Left lung (tissue), 14 donors: ENCODE measurements at regions of chr1 and their contacts with region 1.

Region 1: DNA sequence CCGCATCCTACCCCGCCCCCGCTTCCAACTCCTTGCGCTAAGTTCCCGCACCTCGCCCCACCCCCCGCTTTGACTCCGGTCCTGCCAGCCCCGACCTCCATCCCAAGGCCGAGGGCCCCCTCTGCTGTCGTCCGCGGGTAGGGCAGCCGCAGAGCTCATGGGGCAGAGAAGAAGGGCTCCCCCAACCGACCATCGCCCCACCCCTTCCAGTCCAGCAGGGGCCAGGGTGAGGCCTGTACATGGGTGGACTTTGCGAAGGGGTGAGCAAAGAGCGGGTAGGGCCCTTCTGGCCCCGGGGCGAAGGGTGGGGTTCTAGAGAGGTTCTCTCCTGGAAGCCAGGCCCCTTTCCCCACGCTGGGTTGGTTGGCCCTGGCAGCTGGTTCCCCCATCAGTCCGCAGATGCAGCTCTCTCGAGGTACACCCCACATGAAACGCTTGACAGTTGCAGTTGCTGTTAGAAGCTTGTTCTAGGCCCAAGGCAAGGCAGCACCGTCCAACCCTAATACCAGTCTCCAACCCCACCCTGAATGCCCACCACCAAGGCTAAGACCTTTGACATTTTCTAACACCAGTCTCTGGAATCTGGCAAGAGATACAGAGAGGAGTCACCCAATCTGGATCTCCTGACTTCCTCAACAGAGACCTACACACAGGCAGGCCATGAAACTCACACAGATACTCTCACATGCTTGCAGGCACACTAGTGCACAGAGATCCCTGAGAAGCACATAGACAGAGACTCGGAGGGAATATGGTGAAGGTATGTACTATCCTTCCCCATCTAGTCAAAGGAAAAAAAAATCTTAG is 25.3 kb upstream of the ADGRB2 start:
- DNase-seq: peak; percentile 83 to 99 (median 94)
- ATAC-seq: peak; percentile 97
- H3K4me3 ChIP-seq: peak overlapping the region; percentile 62 to 66
- H3K27ac ChIP-seq: peak overlapping the region in 1 of 2 donors; percentile 92
- H3K4me1 ChIP-seq: peaks cover 0 to 18% of the 10 kb centered on the region in 2 donors
- H3K27me3 ChIP-seq: peaks cover 0 to 12% of the 10 kb centered on the region in 2 donors
- CTCF ChIP-seq: peak; percentile 84 to 90

Region 2: DNA sequence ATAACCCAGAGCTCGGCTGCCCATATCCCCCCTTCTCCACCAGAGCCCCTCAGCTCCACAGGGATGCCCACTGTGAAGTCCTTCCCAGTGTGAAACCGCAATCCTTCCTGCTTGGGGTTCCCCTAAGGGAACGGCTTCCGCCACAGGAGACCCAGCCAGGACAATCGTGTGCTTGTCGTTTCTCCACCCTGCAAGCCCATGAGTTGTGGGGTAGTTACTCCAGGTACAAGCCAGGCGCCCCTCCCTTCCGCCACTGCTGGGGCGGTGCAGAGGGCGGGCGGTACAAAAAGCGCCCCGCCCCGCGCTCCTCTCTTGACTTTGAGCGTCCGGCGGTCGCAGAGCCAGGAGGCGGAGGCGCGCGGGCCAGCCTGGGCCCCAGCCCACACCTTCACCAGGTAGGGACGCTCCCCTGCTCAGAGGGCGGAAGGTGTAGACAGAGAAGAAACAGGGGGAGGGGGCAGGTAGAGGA is 213.2 kb before region 1 on chr1 and contains the start of gene TINAGL1:
- intact Hi-C with region 1: loop called in 1 of 2 experiments (anchors 10 kb)
- DNase-seq: peak in 3 of 4 donors; percentile 63 to 86 (median 75)
- ATAC-seq: peak; percentile 79
- H3K4me3 ChIP-seq: peak within 1 kb of the TSS; percentile 27 to 54
- H3K27ac ChIP-seq: peak within 1 kb of the TSS; percentile 66 to 67
- H3K4me1 ChIP-seq: peaks cover 19 to 47% of the 10 kb centered on the region in 2 donors
- H3K27me3 ChIP-seq: peaks cover 0 to 17% of the 10 kb centered on the region in 2 donors
- CTCF ChIP-seq: no peak
- polyA plus RNA-seq, gene TINAGL1: 34.0 to 55.1 (median 45.7) TPM

Region 3: GRCh38 chr1:31663622-31664452 is 125.6 kb before region 1 on chr1:
- intact Hi-C with region 1: loop called (anchors 5 to 10 kb)
- DNase-seq: peak in 3 of 4 donors; percentile 46 to 70 (median 49)
- ATAC-seq: peak; percentile 55
- H3K4me3 ChIP-seq: no peak overlapping the region
- H3K27ac ChIP-seq: no peak overlapping the region
- H3K4me1 ChIP-seq: peaks cover 7 to 8% of the 10 kb centered on the region in 2 donors
- H3K27me3 ChIP-seq: peaks cover 0 to 2% of the 10 kb centered on the region in 2 donors
- CTCF ChIP-seq: peak; percentile 76 to 86

Region 4: GRCh38 chr1:31855038-31855845 is 65.8 kb after region 1 on chr1:
- intact Hi-C with region 1: no loop called
- DNase-seq: no peak
- ATAC-seq: peak; percentile 50
- H3K4me3 ChIP-seq: no peak overlapping the region
- H3K27ac ChIP-seq: no peak overlapping the region
- H3K4me1 ChIP-seq: no peaks in the 10 kb centered on the region
- H3K27me3 ChIP-seq: no peaks in the 10 kb centered on the region
- CTCF ChIP-seq: no peak

Region 5: DNA sequence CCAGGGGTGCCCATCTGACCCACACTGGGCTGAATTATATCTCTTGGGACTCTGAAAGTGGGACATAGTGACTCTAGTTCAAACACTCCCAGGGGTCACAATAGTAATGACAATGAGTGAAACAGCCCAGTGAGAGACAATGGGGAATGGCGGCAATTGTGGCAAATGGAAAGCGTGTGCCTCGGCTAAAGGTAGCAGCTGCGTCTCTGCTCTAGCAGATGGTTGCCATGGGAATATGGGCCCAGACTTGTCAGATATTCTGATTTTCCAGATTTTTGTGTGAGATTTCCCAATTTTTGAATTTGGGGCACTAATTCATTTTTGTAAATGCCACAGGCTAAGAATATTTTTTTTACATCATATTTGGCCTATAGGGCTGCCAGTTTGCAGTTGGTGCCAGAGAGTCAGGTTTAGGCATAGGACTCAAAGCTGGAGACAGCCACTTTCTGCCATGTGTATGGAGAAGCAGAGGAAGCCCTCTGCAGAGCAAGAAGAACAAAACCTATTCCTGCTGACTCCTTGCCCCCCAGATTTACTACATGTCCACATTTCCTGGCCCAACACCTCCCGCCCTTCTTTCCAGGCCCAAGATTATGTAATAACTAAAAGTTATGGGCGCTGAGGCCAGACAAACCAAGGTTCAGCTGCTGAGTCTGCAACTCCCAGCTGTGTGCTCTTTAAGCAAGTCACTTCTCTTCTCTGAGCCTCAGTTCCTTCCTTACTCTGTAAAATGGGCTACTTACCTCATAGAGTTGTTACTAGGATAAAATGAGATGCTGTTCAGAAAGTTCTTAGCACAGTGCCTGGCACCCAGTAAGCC is 170.3 kb after region 1 on chr1:
- intact Hi-C with region 1: loop called in 1 of 2 experiments (anchors 10 kb)
- DNase-seq: no peak
- ATAC-seq: no peak
- H3K4me3 ChIP-seq: no peak overlapping the region
- H3K27ac ChIP-seq: peak overlapping the region in 1 of 2 donors; percentile 10
- H3K4me1 ChIP-seq: peaks cover 11 to 85% of the 10 kb centered on the region in 2 donors
- H3K27me3 ChIP-seq: no peaks in the 10 kb centered on the region
- CTCF ChIP-seq: no peak